ENCODE measurements at regions of chr5 and their contacts with region 1.

Region 1: GRCh38 chr5:138737494-138738265 is 15.5 kb upstream of the CTNNA1 start:
- DNase-seq: no peak
- H3K4me3 Mint-ChIP-seq: no peak overlapping the region
- H3K27ac Mint-ChIP-seq: peak overlapping the region; percentile 88
- H3K4me1 Mint-ChIP-seq: peaks cover 34% of the 10 kb centered on the region
- H3K27me3 Mint-ChIP-seq: peaks cover 13% of the 10 kb centered on the region

Region 2: GRCh38 chr5:138601444-138601843 is 136.2 kb before region 1 on chr5:
- intact Hi-C with region 1: loop called (anchors 5 kb)
- DNase-seq: no peak
- H3K4me3 Mint-ChIP-seq: no peak overlapping the region
- H3K27ac Mint-ChIP-seq: no peak overlapping the region
- H3K4me1 Mint-ChIP-seq: peaks cover 14% of the 10 kb centered on the region
- H3K27me3 Mint-ChIP-seq: peaks cover 77% of the 10 kb centered on the region

Region 3: DNA sequence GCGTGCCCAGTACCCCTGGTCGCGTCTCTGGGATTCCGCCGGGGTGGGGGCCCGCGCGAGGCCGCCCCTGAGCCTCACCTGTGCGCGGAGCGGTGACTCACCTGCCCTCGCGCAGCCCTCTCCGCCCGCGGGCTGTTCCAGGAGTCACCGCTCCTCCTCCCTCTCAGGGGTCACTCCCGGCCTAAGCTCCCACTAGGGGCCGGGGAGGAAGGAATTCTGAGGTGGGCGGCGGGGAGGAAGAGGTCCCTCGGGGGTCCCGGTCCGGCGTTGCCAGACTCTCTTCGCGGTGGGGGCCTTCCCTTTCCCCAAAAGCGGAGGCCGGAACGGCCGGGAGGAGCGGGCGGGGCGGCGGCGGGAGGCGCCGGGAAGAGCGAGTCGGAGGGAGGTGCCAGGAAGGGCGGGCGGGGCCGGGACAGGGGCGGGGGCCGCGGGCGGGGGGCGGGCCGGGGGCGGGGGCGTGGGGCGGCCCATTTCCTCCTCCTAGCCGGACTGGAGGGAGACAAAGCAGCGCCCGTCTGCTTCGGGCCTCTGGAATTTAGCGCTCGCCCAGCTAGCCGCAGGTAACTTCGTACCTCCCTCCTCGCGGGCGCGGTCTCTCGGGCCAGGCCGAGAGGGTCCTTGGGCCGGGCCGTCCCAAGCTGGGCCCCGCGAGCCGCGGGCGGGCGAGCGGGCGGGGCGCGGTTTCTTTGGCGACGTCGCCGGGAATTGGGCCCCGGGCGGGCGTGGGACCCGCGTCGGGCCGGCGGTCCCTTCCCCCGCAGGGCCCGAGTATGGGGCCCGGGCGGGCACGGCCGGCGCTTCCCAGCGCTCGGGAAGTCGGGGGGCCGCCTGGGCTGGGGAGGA is 15.5 kb after region 1 on chr5 and contains the start of gene CTNNA1:
- intact Hi-C with region 1: loop called (anchors 1 kb)
- DNase-seq: peak; percentile 86
- H3K4me3 Mint-ChIP-seq: peak within 1 kb of the TSS; percentile 78
- H3K27ac Mint-ChIP-seq: peak within 1 kb of the TSS; percentile 63
- H3K4me1 Mint-ChIP-seq: peaks cover 31% of the 10 kb centered on the region
- H3K27me3 Mint-ChIP-seq: peaks cover 34% of the 10 kb centered on the region
- total RNA-seq, gene CTNNA1: 58.7 and 78.6 TPM in 2 replicates

Region 4: GRCh38 chr5:139246394-139246793 is 508.7 kb after region 1 on chr5:
- intact Hi-C with region 1: loop called (anchors 1 kb)
- DNase-seq: peak; percentile 72
- H3K4me3 Mint-ChIP-seq: peak overlapping the region; percentile 71
- H3K27ac Mint-ChIP-seq: peak overlapping the region; percentile 91
- H3K4me1 Mint-ChIP-seq: peaks cover 26% of the 10 kb centered on the region
- H3K27me3 Mint-ChIP-seq: peaks cover 5% of the 10 kb centered on the region